ENCODE measurements at regions of chrX and their contacts with region 1.

Region 1: DNA sequence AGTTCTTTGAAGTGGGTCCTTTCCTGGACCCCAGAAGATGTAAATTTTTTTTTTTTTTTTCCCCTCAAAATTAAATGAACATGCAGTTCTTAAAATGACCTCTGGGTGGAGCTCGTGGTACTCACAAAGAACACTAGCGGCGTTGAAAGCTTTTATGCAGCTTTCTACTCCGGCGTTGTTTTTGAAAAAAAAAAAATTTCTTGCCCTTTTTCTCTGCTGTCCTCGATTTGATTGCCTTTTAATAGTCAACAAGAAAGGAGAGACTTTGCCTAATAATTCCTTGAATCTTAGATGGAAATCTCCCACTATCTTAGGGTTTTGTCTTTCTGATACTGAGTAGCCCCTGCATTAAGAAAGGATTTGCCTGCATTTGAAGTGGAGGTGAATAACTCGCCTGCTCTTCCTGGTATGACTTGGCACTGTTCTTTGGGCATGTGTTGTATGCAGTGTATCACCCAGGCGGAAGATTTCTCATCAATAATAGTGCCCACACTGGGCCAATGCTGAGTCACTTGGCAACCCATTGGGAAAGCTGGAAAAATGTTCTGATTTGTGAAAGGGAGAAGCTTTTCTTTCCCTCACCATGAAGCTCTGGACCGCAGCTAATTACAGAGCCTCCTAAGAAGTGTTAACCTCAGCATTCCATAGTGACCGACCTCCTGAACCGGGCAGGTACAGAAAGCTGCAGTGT is 104.0 kb downstream of the PHEX start:
- DNase-seq: peak; percentile 87
- H3K4me3 Mint-ChIP-seq: peak overlapping the region; percentile 49
- H3K27ac Mint-ChIP-seq: peak overlapping the region; percentile 91
- H3K4me1 Mint-ChIP-seq: peaks cover 31% of the 10 kb centered on the region
- H3K27me3 Mint-ChIP-seq: no peaks in the 10 kb centered on the region
- CTCF ChIP-seq: peak; percentile 78

Region 2: GRCh38 chrX:21985332-21985777 is 150.8 kb before region 1 on chrX:
- CTCF ChIA-PET with region 1: interaction called, 37 read pairs
- POLR2A ChIA-PET with region 1: interaction called, 15 read pairs
- intact Hi-C with region 1: loop called (anchors 1 kb)
- DNase-seq: peak; percentile 85
- H3K4me3 Mint-ChIP-seq: no peak overlapping the region
- H3K27ac Mint-ChIP-seq: no peak overlapping the region
- H3K4me1 Mint-ChIP-seq: no peaks in the 10 kb centered on the region
- H3K27me3 Mint-ChIP-seq: peaks cover 62% of the 10 kb centered on the region
- CTCF ChIP-seq: peak; percentile 92

Region 3: GRCh38 chrX:22037911-22038537 is 98.1 kb before region 1 on chrX:
- CTCF ChIA-PET with region 1: no interaction called
- POLR2A ChIA-PET with region 1: no interaction called
- intact Hi-C with region 1: no loop called
- DNase-seq: no peak
- H3K4me3 Mint-ChIP-seq: no peak overlapping the region
- H3K27ac Mint-ChIP-seq: no peak overlapping the region
- H3K4me1 Mint-ChIP-seq: no peaks in the 10 kb centered on the region
- H3K27me3 Mint-ChIP-seq: peaks cover 76% of the 10 kb centered on the region
- CTCF ChIP-seq: no peak

Region 4: DNA sequence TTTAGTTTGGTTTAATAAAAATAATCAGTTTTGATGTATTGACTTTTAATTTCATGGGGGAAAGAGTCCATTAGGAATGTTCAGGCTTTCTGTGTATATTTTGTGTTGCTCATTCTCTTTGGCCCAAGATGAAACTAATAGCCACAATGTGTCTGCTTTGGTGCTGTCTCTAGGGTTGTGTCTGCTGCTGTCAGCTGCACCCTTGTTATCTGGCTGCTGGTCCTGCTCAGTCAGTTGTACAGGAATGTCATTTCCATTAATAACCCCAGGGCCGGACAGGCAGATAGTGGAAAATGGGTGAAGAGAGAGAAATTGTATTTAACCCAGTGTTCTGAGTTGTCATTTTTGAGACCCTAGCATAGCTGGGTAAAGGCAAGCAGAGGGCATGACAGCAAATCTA is 11.1 kb after region 1 on chrX:
- CTCF ChIA-PET with region 1: interaction called, 18 read pairs
- POLR2A ChIA-PET with region 1: interaction called, 3 read pairs
- intact Hi-C with region 1: no loop called
- DNase-seq: no peak
- H3K4me3 Mint-ChIP-seq: no peak overlapping the region
- H3K27ac Mint-ChIP-seq: no peak overlapping the region
- H3K4me1 Mint-ChIP-seq: no peaks in the 10 kb centered on the region
- H3K27me3 Mint-ChIP-seq: peaks cover 61% of the 10 kb centered on the region
- CTCF ChIP-seq: no peak

Region 5: DNA sequence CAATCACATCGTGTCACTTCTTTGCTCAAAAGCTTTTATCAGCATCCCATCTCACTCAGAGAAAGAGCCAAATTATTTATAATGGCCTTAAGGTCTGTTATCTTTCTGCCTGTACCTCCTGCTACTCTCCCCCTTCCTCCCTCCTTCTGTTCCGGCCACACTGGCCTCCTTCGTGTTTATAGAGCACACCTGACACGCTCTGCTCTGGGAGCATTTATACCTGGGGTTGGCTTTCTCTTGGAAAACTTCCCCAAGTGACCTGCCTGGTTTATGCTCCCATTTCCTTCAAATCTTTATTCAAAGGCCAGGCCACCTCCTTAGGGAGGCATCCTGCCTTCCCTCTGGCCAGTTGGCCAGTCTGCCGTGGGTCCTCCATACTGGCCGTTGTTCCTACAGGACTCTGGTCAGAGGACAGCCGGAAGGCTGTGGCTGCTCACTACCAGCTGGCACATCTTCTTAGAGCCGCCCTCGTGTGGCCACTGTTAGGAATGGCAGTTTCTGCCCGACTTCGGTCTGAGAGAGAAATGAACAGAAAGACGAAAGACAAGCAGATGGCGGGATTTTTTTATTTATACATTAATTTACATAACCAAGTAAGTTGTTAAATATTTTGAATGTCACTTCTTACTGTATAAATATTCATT is 56.4 kb after region 1 on chrX:
- CTCF ChIA-PET with region 1: interaction called, 40 read pairs
- POLR2A ChIA-PET with region 1: no interaction called
- intact Hi-C with region 1: loop called (anchors 1 kb)
- DNase-seq: peak; percentile 75
- H3K4me3 Mint-ChIP-seq: no peak overlapping the region
- H3K27ac Mint-ChIP-seq: no peak overlapping the region
- H3K4me1 Mint-ChIP-seq: peaks cover 6% of the 10 kb centered on the region
- H3K27me3 Mint-ChIP-seq: peaks cover 60% of the 10 kb centered on the region
- CTCF ChIP-seq: peak; percentile 76

Region 6: DNA sequence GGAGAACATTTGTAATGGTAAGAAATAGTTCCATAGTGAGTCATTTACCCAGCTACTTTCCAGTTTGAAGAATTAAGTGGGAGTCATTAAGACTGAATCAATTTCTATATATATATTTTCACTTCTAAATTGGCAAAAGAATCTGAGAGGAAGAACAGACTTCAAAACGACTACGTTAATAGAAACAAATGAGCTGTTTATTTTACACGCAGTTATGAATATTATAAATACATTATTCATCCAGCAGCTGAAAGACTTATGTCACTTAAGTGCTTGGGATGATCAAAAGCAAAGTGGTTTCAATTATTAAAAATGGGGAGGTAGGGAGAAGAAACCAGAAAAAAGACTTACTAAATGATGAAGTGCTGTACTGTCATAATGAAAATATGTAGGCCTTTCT is 603.1 kb after region 1 on chrX:
- CTCF ChIA-PET with region 1: interaction called, 12 read pairs
- POLR2A ChIA-PET with region 1: no interaction called
- intact Hi-C with region 1: no loop called
- DNase-seq: no peak
- H3K4me3 Mint-ChIP-seq: no peak overlapping the region
- H3K27ac Mint-ChIP-seq: no peak overlapping the region
- H3K4me1 Mint-ChIP-seq: no peaks in the 10 kb centered on the region
- H3K27me3 Mint-ChIP-seq: peaks cover 28% of the 10 kb centered on the region
- CTCF ChIP-seq: no peak

Region 7: DNA sequence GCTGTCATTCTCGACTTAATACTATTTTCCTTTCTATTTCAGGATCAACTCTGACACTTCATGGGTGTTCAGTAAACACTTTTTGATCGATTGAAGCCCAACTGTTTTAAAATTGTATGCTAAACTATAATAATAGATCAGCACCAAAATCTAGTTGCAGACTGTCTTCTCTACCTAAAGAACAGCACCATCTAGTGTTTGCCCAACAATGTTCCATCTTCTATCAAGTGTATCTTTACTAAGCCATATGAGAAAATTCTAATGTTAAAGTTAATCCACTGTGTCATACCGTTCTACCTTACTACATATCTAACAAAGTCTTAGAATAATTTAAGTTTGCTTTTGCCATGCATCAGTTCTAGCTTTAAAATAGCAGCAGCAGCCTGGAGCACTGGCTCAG is 1418.2 kb after region 1 on chrX:
- CTCF ChIA-PET with region 1: interaction called, 6 read pairs
- POLR2A ChIA-PET with region 1: no interaction called
- intact Hi-C with region 1: loop called (anchors 1 kb)
- DNase-seq: peak; percentile 52
- H3K4me3 Mint-ChIP-seq: no peak overlapping the region
- H3K27ac Mint-ChIP-seq: no peak overlapping the region
- H3K4me1 Mint-ChIP-seq: no peaks in the 10 kb centered on the region
- H3K27me3 Mint-ChIP-seq: peaks cover 61% of the 10 kb centered on the region
- CTCF ChIP-seq: peak; percentile 63